ENCODE measurements at regions of chr3 and their contacts with region 1.

Region 1: GRCh38 chr3:111539351-111540331 is 2.4 kb upstream of the CD96 start:
- DNase-seq: peak; percentile 45 to 84
- ATAC-seq: peak; percentile 46 to 59 (median 50)
- H3K4me3 ChIP-seq: peak overlapping the region; percentile 17
- H3K4me3 Mint-ChIP-seq: peak overlapping the region; percentile 83
- H3K27ac ChIP-seq: peak overlapping the region; percentile 34
- H3K27ac Mint-ChIP-seq: peak overlapping the region in 1 of 2 donors; percentile 70
- H3K4me1 ChIP-seq: peaks cover 26% of the 10 kb centered on the region
- H3K4me1 Mint-ChIP-seq: peaks cover 22 to 26% of the 10 kb centered on the region in 2 donors
- H3K27me3 ChIP-seq: no peaks in the 10 kb centered on the region
- H3K27me3 Mint-ChIP-seq: peaks cover 0 to 3% of the 10 kb centered on the region in 2 donors
- CTCF ChIP-seq: peak; percentile 80

Region 2: DNA sequence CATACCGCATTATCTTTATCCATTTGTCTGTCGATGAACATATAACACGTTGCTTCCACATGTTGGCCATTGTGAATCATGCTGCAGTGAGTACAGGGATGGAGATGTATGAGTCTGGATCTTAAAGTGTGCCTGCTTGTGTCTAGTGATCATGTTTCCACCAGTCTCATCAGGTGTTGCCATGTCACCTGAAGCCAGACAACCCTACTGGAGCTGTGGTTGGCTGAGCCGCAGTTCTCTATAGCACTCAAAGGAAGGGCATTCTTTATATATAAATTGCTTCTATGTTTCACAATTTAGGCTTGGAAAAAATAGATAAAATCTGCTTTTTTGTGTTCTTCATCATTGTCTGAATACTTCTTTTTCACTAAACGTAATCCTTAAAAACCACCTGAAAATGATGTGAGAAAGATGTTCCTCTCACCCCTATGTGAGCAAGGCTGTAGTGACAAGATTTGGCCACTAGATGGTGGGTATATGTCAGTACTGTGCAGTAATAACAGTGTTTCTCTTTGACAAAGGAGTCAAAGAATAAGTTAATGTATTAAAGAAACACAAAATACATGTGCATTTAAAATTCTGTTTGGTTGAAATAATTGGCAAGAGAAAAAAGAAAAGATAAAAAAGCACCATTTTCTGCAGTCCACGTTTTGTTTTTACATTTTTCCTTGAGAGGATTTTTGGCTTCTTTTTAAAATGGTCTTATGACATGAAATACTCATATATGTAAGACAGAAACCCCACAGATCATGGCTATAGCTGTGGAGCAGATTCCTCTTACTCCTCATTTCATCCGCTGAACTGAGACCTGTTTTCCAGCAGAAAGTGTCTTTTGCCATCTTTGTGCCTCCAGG is 1807.8 kb before region 1 on chr3:
- intact Hi-C with region 1: loop called (anchors 5 kb)
- DNase-seq: peak; percentile 22 to 82
- ATAC-seq: peak; percentile 83 to 95 (median 88)
- H3K4me3 ChIP-seq: no peak overlapping the region
- H3K4me3 Mint-ChIP-seq: no peak overlapping the region
- H3K27ac ChIP-seq: no peak overlapping the region
- H3K27ac Mint-ChIP-seq: no peak overlapping the region
- H3K4me1 ChIP-seq: no peaks in the 10 kb centered on the region
- H3K4me1 Mint-ChIP-seq: peaks cover 0 to 10% of the 10 kb centered on the region in 2 donors
- H3K27me3 ChIP-seq: no peaks in the 10 kb centered on the region
- H3K27me3 Mint-ChIP-seq: no peaks in the 10 kb centered on the region
- CTCF ChIP-seq: peak; percentile 96

Region 3: GRCh38 chr3:111071257-111072015 is 468.2 kb before region 1 on chr3 and contains the start of gene NECTIN3:
- intact Hi-C with region 1: loop called (anchors 5 kb)
- DNase-seq: peak; percentile 53 to 93
- ATAC-seq: peak; percentile 88 to 90 (median 90)
- H3K4me3 ChIP-seq: peak within 1 kb of the TSS; percentile 57
- H3K4me3 Mint-ChIP-seq: peak within 1 kb of the TSS; percentile 92
- H3K27ac ChIP-seq: peak within 1 kb of the TSS; percentile 4
- H3K27ac Mint-ChIP-seq: peak within 1 kb of the TSS; percentile 61 to 88
- H3K4me1 ChIP-seq: peaks cover 19% of the 10 kb centered on the region
- H3K4me1 Mint-ChIP-seq: peaks cover 27 to 32% of the 10 kb centered on the region in 2 donors
- H3K27me3 ChIP-seq: peaks cover 25% of the 10 kb centered on the region
- H3K27me3 Mint-ChIP-seq: peaks cover 30 to 34% of the 10 kb centered on the region in 2 donors
- CTCF ChIP-seq: no peak
- total RNA-seq, gene NECTIN3: 0.26 to 3.7 (median 2.3) TPM

Region 4: GRCh38 chr3:111608383-111608782 is 68.7 kb after region 1 on chr3:
- intact Hi-C with region 1: loop called (anchors 1 kb)
- DNase-seq: peak in 1 of 2 donors; percentile 63
- ATAC-seq: peak; percentile 77 to 87 (median 81)
- H3K4me3 ChIP-seq: no peak overlapping the region
- H3K4me3 Mint-ChIP-seq: peak overlapping the region; percentile 30
- H3K27ac ChIP-seq: peak overlapping the region; percentile 63
- H3K27ac Mint-ChIP-seq: peak overlapping the region; percentile 91 to 93
- H3K4me1 ChIP-seq: peaks cover 22% of the 10 kb centered on the region
- H3K4me1 Mint-ChIP-seq: peaks cover 47 to 58% of the 10 kb centered on the region in 2 donors
- H3K27me3 ChIP-seq: no peaks in the 10 kb centered on the region
- H3K27me3 Mint-ChIP-seq: no peaks in the 10 kb centered on the region
- CTCF ChIP-seq: no peak

Region 5: DNA sequence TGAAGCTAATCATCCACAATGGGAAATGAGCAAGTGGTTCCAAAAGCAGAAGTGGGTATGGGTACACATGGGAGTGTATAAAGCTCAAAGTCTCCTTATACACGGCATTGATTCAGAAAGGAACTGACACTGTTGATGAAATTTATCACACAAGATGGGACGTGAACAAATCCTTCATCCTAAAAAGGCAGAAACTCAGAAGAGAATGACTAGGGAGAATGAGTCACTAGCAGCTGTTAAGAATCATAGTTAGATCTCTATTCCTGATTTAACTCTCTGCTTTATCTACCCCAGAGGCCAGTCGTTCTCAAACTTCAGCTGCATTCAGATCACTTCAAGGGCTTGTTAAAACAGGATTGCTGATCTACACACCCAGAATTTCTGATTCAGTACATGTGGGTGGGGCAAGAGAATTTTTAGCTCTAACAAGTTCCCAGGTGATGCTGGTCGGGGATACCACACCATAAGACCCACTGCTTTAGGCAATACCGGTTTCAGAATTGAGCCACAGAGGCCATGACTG is 221.7 kb after region 1 on chr3:
- intact Hi-C with region 1: no loop called
- DNase-seq: no peak
- ATAC-seq: no peak
- H3K4me3 ChIP-seq: no peak overlapping the region
- H3K4me3 Mint-ChIP-seq: no peak overlapping the region
- H3K27ac ChIP-seq: no peak overlapping the region
- H3K27ac Mint-ChIP-seq: no peak overlapping the region
- H3K4me1 ChIP-seq: no peaks in the 10 kb centered on the region
- H3K4me1 Mint-ChIP-seq: peaks cover 0 to 4% of the 10 kb centered on the region in 2 donors
- H3K27me3 ChIP-seq: no peaks in the 10 kb centered on the region
- H3K27me3 Mint-ChIP-seq: no peaks in the 10 kb centered on the region
- CTCF ChIP-seq: no peak

Region 6: GRCh38 chr3:111781561-111782446 is 242.2 kb after region 1 on chr3:
- intact Hi-C with region 1: no loop called
- DNase-seq: no peak
- ATAC-seq: no peak
- H3K4me3 ChIP-seq: no peak overlapping the region
- H3K4me3 Mint-ChIP-seq: no peak overlapping the region
- H3K27ac ChIP-seq: no peak overlapping the region
- H3K27ac Mint-ChIP-seq: no peak overlapping the region
- H3K4me1 ChIP-seq: no peaks in the 10 kb centered on the region
- H3K4me1 Mint-ChIP-seq: no peaks in the 10 kb centered on the region
- H3K27me3 ChIP-seq: no peaks in the 10 kb centered on the region
- H3K27me3 Mint-ChIP-seq: no peaks in the 10 kb centered on the region
- CTCF ChIP-seq: no peak

Region 7: GRCh38 chr3:111967651-111968274 is 428.1 kb after region 1 on chr3:
- intact Hi-C with region 1: loop called (anchors 10 kb)
- DNase-seq: peak; percentile 66 to 89
- ATAC-seq: peak; percentile 86 to 98 (median 95)
- H3K4me3 ChIP-seq: no peak overlapping the region
- H3K4me3 Mint-ChIP-seq: no peak overlapping the region
- H3K27ac ChIP-seq: no peak overlapping the region
- H3K27ac Mint-ChIP-seq: peak overlapping the region; percentile 8 to 62
- H3K4me1 ChIP-seq: no peaks in the 10 kb centered on the region
- H3K4me1 Mint-ChIP-seq: peaks cover 5 to 7% of the 10 kb centered on the region in 2 donors
- H3K27me3 ChIP-seq: no peaks in the 10 kb centered on the region
- H3K27me3 Mint-ChIP-seq: no peaks in the 10 kb centered on the region
- CTCF ChIP-seq: peak; percentile 96

Measured in natural killer cell (primary cell).